Calu3 (cell line): ENCODE measurements at regions of chr3 and their contacts with region 1.

Region 1: DNA sequence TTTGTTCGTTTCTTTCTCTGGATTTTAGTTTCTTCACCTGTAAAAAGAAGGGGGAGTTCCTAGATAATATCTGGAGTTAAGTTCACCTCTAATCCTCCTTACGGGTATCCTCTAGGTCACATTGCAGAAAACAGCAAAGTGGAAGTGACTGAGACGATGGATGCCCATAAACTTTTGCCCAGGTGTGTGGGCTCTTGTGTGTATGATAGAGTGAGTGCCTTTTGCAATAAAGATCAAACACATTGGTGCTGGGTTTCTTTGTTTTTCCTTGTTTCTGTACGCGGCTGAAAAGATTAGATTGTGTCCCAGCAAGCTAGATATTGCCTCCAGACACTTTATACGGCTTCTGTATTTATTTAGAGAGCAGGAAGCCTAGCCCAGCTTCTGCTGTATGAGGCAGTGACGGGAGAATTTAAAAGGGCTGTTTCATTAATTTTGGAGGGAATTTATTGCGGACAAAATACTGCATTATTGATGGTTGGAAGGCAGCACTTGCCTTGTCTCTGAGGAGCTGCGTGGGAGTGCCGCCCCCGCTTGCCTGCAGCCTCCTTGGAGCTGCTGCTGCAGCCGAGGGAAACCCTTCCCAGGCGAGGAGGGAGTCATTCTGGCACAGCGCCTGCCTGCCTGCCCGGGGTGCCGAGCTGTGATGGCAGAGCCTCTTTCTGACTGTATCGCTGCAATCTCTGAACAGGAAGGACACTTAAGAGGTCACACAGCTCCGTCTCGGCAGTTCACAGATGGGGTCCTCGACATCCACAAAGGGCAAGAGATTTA is 38.5 kb downstream of the PYDC2 start:
- DNase-seq: peak; percentile 76
- H3K4me3 Mint-ChIP-seq: peak overlapping the region; percentile 76
- H3K27ac Mint-ChIP-seq: peak overlapping the region; percentile 68
- H3K4me1 Mint-ChIP-seq: peaks cover 16% of the 10 kb centered on the region
- H3K27me3 Mint-ChIP-seq: no peaks in the 10 kb centered on the region
- CTCF ChIP-seq: no peak

Region 2: GRCh38 chr3:191809326-191809949 is 309.9 kb after region 1 on chr3:
- CTCF ChIA-PET with region 1: interaction called, 3 read pairs
- intact Hi-C with region 1: loop called (anchors 5 kb)
- DNase-seq: peak; percentile 35
- H3K4me3 Mint-ChIP-seq: no peak overlapping the region
- H3K27ac Mint-ChIP-seq: no peak overlapping the region
- H3K4me1 Mint-ChIP-seq: no peaks in the 10 kb centered on the region
- H3K27me3 Mint-ChIP-seq: no peaks in the 10 kb centered on the region
- CTCF ChIP-seq: no peak

Region 3: DNA sequence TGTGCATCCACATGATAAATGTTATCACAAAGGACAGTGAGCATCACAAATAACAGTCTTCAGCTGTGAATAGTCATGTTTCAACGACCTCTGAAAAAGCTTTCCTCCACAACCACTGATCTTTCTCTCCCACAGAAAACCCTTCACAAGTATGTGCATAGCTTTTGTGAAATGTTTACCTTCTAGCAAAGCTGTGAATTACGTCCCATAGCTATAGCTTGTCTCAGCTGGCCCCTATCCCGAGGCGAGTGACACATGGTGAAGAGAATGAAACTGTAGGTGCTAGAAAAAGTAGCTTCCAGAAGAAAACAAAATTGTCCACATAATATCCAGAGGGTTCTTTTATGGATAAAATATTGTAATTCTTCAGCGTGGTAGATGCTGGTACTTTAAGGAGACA is 1045.8 kb after region 1 on chr3:
- CTCF ChIA-PET with region 1: no interaction called
- intact Hi-C with region 1: no loop called
- DNase-seq: no peak
- H3K4me3 Mint-ChIP-seq: no peak overlapping the region
- H3K27ac Mint-ChIP-seq: no peak overlapping the region
- H3K4me1 Mint-ChIP-seq: no peaks in the 10 kb centered on the region
- H3K27me3 Mint-ChIP-seq: peaks cover 30% of the 10 kb centered on the region
- CTCF ChIP-seq: no peak